Endothelial cell of umbilical vein (primary cell): ENCODE measurements at regions of chrX and their contacts with region 1.

Region 1: DNA sequence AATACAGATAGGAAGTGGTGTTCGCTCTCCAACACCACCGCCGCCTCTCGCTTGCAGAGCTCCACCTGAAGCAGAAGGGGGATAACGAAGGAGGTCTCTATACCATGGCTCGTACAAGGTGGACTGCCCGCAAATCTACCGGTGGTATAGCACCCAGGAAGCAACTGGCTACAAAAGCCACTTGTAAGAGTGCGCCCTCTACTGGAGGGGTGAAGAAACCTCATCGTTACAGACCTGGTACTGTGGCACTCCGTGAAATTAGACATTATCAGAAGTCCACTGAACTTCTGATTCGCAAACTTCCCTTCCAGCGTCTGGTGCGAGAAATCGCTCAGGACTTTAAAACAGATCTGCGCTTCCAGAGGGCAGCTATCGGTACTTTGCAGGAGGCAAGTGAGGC is 5.2 kb upstream of the BMP15 start:
- DNase-seq: no peak
- H3K4me3 ChIP-seq: no peak overlapping the region
- H3K27ac ChIP-seq: no peak overlapping the region
- H3K4me1 ChIP-seq: no peaks in the 10 kb centered on the region
- H3K27me3 ChIP-seq: peaks cover 0 to 2% of the 10 kb centered on the region in 2 experiments
- CTCF ChIP-seq: peak in 1 of 2 donors; percentile 5
- POLR2A ChIP-seq: no peak

Region 2: DNA sequence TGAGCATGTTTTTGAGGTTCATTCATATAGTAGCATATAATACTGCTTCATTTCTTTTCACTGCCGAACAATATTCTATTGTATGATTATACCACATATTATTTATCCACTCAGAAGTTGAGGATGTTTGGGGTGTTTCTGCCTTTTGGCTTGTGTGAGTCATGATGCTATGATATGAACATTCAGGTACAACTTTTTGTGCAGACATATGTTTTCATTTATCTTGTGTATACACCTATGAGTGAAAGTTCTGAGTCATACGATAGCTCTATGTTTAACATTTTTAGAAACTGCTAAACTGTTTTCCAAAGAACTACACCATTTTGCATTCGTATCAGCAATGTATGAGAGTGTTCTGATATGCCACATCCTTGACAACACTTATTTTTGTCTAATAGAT is 149.1 kb before region 1 on chrX:
- CTCF ChIA-PET with region 1: interaction called, 147 read pairs
- POLR2A ChIA-PET with region 1: no interaction called
- dilution Hi-C with region 1: no loop called
- intact Hi-C with region 1: no loop called
- DNase-seq: no peak
- H3K4me3 ChIP-seq: no peak overlapping the region
- H3K27ac ChIP-seq: no peak overlapping the region
- H3K4me1 ChIP-seq: no peaks in the 10 kb centered on the region
- H3K27me3 ChIP-seq: no peaks in the 10 kb centered on the region
- CTCF ChIP-seq: no peak
- POLR2A ChIP-seq: no peak